HEK293 (cell line): ENCODE measurements at regions of chr11 and their contacts with region 1.

Region 1: GRCh38 chr11:101860696-101861427 is 53.9 kb upstream of the CEP126 start:
- H3K4me3 ChIP-seq: no peak overlapping the region
- H3K27ac ChIP-seq: no peak overlapping the region
- H3K4me1 ChIP-seq: no peaks in the 10 kb centered on the region
- CTCF ChIP-seq: no peak

Region 2: DNA sequence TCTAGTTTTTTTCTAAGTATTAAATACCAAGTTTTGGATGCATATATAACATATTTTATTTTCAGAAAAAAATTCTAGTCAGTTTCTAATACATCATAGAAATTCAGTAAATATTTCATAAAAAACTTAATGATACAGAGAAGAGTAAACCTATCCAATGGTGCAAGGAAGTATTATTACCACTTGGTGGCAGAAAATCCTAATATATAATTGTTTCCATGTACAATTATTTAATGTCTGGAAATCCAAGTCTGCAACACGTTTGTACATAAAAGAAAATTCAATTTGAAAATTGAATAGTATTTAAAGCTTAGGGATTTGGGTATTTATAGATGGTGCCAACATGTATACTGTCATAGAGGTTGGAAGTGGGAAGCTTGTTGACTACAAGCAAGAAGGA is 404.1 kb before region 1 on chr11:
- CTCF ChIA-PET with region 1: interaction called, 11 read pairs
- POLR2A ChIA-PET with region 1: no interaction called
- H3K4me3 ChIP-seq: no peak overlapping the region
- H3K27ac ChIP-seq: no peak overlapping the region
- H3K4me1 ChIP-seq: no peaks in the 10 kb centered on the region
- CTCF ChIP-seq: no peak

Region 3: GRCh38 chr11:101880222-101880621 is 19.4 kb after region 1 on chr11:
- CTCF ChIA-PET with region 1: interaction called, 21 read pairs
- POLR2A ChIA-PET with region 1: no interaction called
- H3K4me3 ChIP-seq: no peak overlapping the region
- H3K27ac ChIP-seq: no peak overlapping the region
- H3K4me1 ChIP-seq: no peaks in the 10 kb centered on the region
- CTCF ChIP-seq: no peak